ENCODE measurements at regions of chr9 and their contacts with region 1.

Region 1: GRCh38 chr9:34546834-34547827 is 24.3 kb upstream of the ENHO start:
- DNase-seq: peak; percentile 91
- ATAC-seq: peak; percentile 75
- H3K4me3 Mint-ChIP-seq: no peak overlapping the region
- H3K27ac Mint-ChIP-seq: no peak overlapping the region; the same call in 1 of the 2 replicates
- H3K4me1 Mint-ChIP-seq: peaks cover 2% of the 10 kb centered on the region; the same call in 1 of the 2 replicates
- H3K27me3 Mint-ChIP-seq: no peaks in the 10 kb centered on the region; the same call in 1 of the 2 replicates
- CTCF ChIP-seq: peak; percentile 93

Region 2: GRCh38 chr9:33211695-33212393 is 1335.3 kb before region 1 on chr9:
- CTCF ChIA-PET with region 1: no interaction called
- POLR2A ChIA-PET with region 1: no interaction called
- DNase-seq: peak; percentile 31
- ATAC-seq: peak; percentile 90
- H3K4me3 Mint-ChIP-seq: no peak overlapping the region
- H3K27ac Mint-ChIP-seq: peak overlapping the region; percentile 65
- H3K4me1 Mint-ChIP-seq: peaks cover 11% of the 10 kb centered on the region; the same call in 1 of the 2 replicates
- H3K27me3 Mint-ChIP-seq: no peaks in the 10 kb centered on the region; the same call in 1 of the 2 replicates
- CTCF ChIP-seq: no peak

Region 3: GRCh38 chr9:34430843-34431437 is 116.2 kb before region 1 on chr9:
- CTCF ChIA-PET with region 1: interaction called, 20 read pairs
- POLR2A ChIA-PET with region 1: no interaction called
- DNase-seq: peak; percentile 65
- ATAC-seq: peak; percentile 92
- H3K4me3 Mint-ChIP-seq: no peak overlapping the region
- H3K27ac Mint-ChIP-seq: no peak overlapping the region
- H3K4me1 Mint-ChIP-seq: peaks cover 9% of the 10 kb centered on the region
- H3K27me3 Mint-ChIP-seq: no peaks in the 10 kb centered on the region
- CTCF ChIP-seq: no peak

Region 4: DNA sequence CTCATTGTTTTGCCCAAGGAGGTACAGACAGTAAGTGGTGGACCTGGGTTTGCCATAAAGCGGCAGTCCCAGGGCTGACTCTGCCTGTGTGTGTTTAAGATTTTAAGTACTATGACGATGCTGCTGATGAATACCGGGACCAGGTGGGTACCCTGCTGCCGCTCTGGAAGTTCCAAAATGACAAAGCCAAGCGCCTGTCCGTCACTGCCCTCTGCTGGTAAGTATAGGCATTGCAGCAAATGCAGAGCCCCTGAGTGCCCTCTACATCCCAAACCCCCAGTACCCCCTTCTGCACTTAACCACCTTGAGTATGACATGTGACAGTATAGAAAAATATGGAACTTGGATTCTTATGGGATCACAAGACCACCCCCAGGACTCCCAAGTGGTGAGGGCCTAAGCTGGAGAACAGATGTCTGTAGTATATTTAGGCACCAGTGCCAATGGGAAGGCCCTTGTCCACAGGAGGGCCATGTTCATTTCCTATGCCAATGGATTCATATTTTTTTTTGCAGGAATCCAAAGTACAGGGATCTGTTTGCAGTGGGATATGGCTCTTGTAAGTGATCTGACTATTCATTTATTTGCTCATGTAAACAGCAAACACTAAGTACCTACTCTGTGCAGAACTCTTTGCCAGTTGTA is 46.4 kb before region 1 on chr9:
- CTCF ChIA-PET with region 1: interaction called, 20 read pairs
- POLR2A ChIA-PET with region 1: interaction called, 3 read pairs
- DNase-seq: peak; percentile 83
- ATAC-seq: peak; percentile 80
- H3K4me3 Mint-ChIP-seq: no peak overlapping the region
- H3K27ac Mint-ChIP-seq: no peak overlapping the region
- H3K4me1 Mint-ChIP-seq: peaks cover 12% of the 10 kb centered on the region
- H3K27me3 Mint-ChIP-seq: peaks cover 4% of the 10 kb centered on the region; the same call in 1 of the 2 replicates
- CTCF ChIP-seq: peak; percentile 98

Region 5: GRCh38 chr9:34522971-34523797 is 23.9 kb before region 1 on chr9 and contains the start of gene ENHO:
- CTCF ChIA-PET with region 1: interaction called, 25 read pairs
- POLR2A ChIA-PET with region 1: no interaction called
- DNase-seq: peak; percentile 94
- ATAC-seq: peak; percentile 97
- H3K4me3 Mint-ChIP-seq: peak within 1 kb of the TSS; percentile 86
- H3K27ac Mint-ChIP-seq: no peak within 1 kb of the TSS; the same call in 1 of the 2 replicates
- H3K4me1 Mint-ChIP-seq: peaks cover 20% of the 10 kb centered on the region
- H3K27me3 Mint-ChIP-seq: peaks cover 44% of the 10 kb centered on the region
- CTCF ChIP-seq: no peak
- total RNA-seq, gene ENHO: 26.9 to 28.3 TPM (median 27.9 TPM) in 3 replicates

Region 6: GRCh38 chr9:34570376-34570775 is 23.2 kb after region 1 on chr9:
- CTCF ChIA-PET with region 1: interaction called, 11 read pairs
- POLR2A ChIA-PET with region 1: no interaction called
- DNase-seq: no peak
- ATAC-seq: no peak
- H3K4me3 Mint-ChIP-seq: no peak overlapping the region
- H3K27ac Mint-ChIP-seq: 0 out of 2 replicates have a peak overlapping the region, but pooled peaks have one; percentile 13
- H3K4me1 Mint-ChIP-seq: peaks cover 27% of the 10 kb centered on the region
- H3K27me3 Mint-ChIP-seq: peaks cover 2% of the 10 kb centered on the region; the same call in 1 of the 2 replicates
- CTCF ChIP-seq: no peak

Region 7: DNA sequence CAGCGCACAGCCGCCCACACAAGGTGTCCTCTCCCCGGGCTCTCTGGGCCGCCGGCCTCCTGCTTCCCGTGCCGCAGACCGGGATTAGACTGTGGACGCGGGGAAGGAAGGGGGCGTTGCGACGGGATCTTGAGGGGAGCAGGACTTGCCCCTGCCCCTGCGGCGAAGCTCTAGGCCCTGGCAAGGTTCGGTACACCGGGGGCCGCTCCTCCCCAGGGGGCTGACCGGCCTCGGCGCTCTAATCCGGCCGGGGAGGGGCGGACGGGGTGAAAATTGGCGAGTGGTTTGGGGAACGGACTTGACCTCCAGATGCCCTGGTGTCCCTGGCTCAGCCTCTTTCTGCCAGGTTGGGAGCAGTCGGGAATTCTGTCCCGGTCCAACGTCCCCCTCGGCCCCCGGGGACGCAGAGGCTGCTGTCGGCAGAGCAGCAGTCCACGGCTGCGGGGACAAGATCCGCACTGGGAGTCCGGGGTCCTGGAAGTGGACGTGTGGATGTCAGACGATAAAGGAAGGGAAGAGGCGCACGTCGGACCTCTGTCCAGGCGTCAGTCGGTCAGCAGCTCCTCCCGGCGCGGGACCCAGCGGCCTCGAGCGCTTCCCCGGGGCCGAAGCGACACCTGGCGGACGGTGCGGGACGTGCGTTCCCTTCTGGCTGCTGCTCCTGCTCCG is 44.3 kb after region 1 on chr9:
- CTCF ChIA-PET with region 1: interaction called, 192 read pairs
- POLR2A ChIA-PET with region 1: interaction called, 4 read pairs
- DNase-seq: peak; percentile 93
- ATAC-seq: peak; percentile 64
- H3K4me3 Mint-ChIP-seq: peak overlapping the region; percentile 78
- H3K27ac Mint-ChIP-seq: no peak overlapping the region
- H3K4me1 Mint-ChIP-seq: peaks cover 32% of the 10 kb centered on the region
- H3K27me3 Mint-ChIP-seq: peaks cover 79% of the 10 kb centered on the region
- CTCF ChIP-seq: peak; percentile 89

Region 8: GRCh38 chr9:34637356-34638137 is 90.4 kb after region 1 on chr9 and contains the start of gene SIGMAR1:
- CTCF ChIA-PET with region 1: interaction called, 17 read pairs
- POLR2A ChIA-PET with region 1: no interaction called
- DNase-seq: peak; percentile 95
- ATAC-seq: peak; percentile 89
- H3K4me3 Mint-ChIP-seq: peak within 1 kb of the TSS; percentile 83
- H3K27ac Mint-ChIP-seq: peak within 1 kb of the TSS; percentile 3
- H3K4me1 Mint-ChIP-seq: peaks cover 22% of the 10 kb centered on the region
- H3K27me3 Mint-ChIP-seq: peaks cover 11% of the 10 kb centered on the region
- CTCF ChIP-seq: no peak
- total RNA-seq, gene SIGMAR1: 108 to 116 TPM (median 109 TPM) in 3 replicates